A673 (cell line): ENCODE measurements at regions of chr18 and their contacts with region 1.

Region 1: DNA sequence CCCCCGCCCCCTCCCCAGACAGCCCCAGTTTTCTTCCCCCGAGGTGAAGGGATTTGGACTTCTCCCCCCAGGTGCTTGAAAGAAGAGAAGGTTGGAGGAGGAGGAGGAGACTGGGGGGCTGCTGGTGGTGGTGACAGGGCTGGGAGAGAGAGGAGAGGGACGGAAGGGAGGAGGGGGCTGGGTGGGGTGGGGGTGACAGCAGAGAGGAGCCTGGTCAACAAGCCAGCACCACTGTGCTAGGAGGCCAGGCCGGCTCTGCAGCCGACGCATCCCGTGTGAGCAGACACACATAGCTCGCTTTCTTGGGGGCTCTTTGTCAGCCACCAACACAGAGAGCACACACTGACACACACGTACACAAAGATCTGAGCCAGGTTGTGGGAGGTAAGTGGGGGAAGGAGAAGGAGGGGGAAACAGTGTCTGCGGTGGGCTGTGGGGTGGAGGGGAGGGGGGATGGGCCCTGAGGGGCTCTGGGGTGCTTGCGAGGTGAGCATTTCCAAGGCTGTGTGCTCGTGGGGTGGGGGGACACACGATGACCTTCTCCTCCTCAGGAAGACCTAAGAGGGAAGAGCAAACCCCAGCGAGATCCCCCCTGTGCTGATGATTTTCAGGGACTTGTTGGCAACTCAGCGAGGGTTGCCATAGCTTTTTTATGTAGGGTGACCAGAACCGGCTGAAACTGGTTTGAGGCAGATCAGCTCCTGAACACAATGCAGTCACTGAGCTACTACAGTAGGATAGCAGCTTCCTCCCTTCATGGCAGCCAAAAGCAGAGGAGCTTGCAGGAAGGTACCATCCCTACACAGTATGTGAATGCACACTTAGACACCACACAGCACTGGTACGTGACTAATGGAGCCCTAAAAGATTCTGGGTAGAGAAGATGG is at the start of gene ZNF532:
- DNase-seq: peak; percentile 80
- H3K4me3 ChIP-seq: peak within 1 kb of the TSS; percentile 50
- H3K27ac ChIP-seq: peak within 1 kb of the TSS; percentile 97
- H3K4me1 ChIP-seq: peaks cover 78% of the 10 kb centered on the region
- H3K27me3 ChIP-seq: no peaks in the 10 kb centered on the region
- CTCF ChIP-seq: no peak
- total RNA-seq, gene ZNF532: 118 and 119 TPM in 2 replicates

Region 2: GRCh38 chr18:58937071-58937886 is 72.9 kb after region 1 on chr18:
- CTCF ChIA-PET with region 1: no interaction called
- POLR2A ChIA-PET with region 1: no interaction called
- intact Hi-C with region 1: loop called (anchors 5 kb)
- DNase-seq: peak; percentile 82
- H3K4me3 ChIP-seq: no peak overlapping the region
- H3K27ac ChIP-seq: peak overlapping the region; percentile 90
- H3K4me1 ChIP-seq: peaks cover 67% of the 10 kb centered on the region
- H3K27me3 ChIP-seq: no peaks in the 10 kb centered on the region
- CTCF ChIP-seq: no peak

Region 3: DNA sequence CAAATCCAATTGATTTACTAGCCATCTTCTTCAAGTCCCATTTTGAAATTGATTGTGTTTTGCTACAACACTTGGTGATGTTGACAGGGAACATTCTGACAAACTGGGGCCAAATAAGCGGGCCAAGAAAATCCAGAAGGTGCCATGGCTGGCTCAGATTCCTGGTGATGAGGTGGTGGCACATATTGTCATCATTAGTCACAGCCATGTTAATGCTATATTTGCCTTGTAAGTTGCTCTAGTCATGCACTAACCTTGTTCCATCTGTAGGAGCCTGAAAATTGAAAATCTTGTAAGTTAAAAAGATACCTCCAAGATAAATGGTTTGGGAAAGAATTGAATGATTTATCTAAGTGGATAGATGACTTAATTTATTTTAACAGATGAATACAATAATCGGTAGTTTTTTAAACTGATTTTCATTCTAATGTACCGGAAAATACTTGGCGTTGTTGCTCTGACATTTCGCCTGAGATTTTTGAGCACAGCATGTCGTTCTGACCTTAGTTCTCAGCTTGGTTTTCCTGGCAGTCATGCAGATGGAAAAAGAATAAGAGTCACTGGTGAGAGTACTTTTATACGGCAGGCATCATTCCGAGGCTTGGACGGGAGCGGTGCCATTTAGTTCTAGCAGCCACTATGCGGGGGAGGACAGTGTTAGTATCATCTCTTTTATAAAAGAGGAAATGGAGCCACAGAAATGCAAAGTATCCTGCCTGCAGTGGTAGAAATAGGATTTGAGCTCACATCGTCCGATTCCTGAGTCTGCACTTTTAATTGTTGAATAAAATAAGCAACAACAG is 134.2 kb after region 1 on chr18:
- CTCF ChIA-PET with region 1: no interaction called
- POLR2A ChIA-PET with region 1: interaction called, 3 read pairs
- intact Hi-C with region 1: loop called (anchors 5 kb)
- DNase-seq: peak; percentile 85
- H3K4me3 ChIP-seq: peak overlapping the region; percentile 18
- H3K27ac ChIP-seq: peak overlapping the region; percentile 79
- H3K4me1 ChIP-seq: peaks cover 59% of the 10 kb centered on the region
- H3K27me3 ChIP-seq: no peaks in the 10 kb centered on the region
- CTCF ChIP-seq: no peak

Region 4: GRCh38 chr18:59056706-59057492 is 192.5 kb after region 1 on chr18:
- CTCF ChIA-PET with region 1: no interaction called
- POLR2A ChIA-PET with region 1: no interaction called
- intact Hi-C with region 1: loop called (anchors 5 kb)
- DNase-seq: peak; percentile 88
- H3K4me3 ChIP-seq: no peak overlapping the region
- H3K27ac ChIP-seq: peak overlapping the region; percentile 58
- H3K4me1 ChIP-seq: peaks cover 53% of the 10 kb centered on the region
- H3K27me3 ChIP-seq: no peaks in the 10 kb centered on the region
- CTCF ChIP-seq: peak; percentile 95

Region 5: DNA sequence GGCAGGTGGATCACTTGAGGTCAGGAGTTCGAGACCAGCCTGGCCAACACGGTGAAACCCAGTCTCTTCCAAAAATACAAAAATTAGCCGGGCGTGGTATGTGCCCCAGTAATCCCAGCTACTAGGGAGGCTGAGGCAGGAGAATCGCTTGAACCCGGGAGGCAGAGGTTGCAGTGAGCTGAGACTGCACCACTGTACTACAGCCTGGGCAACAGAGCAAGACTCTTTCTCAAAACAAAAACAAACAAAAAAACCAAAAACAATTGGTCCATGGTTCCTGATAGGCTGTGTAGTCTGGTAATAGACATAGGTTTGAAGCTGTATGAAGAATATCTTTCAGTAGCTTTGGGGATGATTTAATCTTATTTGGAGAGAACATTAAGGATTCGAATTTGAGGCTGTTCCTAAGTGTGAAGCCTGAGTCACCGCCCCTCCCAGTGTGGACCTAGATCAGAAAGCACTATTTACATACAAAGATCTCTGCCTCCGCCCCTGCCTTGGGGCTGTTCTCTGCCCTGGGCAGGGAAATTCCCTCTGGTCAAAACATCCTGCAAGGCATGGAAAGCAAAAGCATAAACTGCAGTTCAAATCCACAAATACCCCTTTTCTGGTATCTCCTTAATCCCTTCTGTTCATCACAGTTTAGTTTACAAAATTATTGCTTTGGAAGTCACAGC is 982.6 kb after region 1 on chr18:
- CTCF ChIA-PET with region 1: no interaction called
- POLR2A ChIA-PET with region 1: no interaction called
- intact Hi-C with region 1: no loop called
- DNase-seq: no peak
- H3K4me3 ChIP-seq: no peak overlapping the region
- H3K27ac ChIP-seq: no peak overlapping the region
- H3K4me1 ChIP-seq: no peaks in the 10 kb centered on the region
- H3K27me3 ChIP-seq: no peaks in the 10 kb centered on the region
- CTCF ChIP-seq: no peak